Activated CD4-positive, alpha-beta T cell treated with anti-CD3 and anti-CD28 coated beads for 36 hours (primary cell): ENCODE measurements at regions of chr6 and their contacts with region 1.

Region 1: DNA sequence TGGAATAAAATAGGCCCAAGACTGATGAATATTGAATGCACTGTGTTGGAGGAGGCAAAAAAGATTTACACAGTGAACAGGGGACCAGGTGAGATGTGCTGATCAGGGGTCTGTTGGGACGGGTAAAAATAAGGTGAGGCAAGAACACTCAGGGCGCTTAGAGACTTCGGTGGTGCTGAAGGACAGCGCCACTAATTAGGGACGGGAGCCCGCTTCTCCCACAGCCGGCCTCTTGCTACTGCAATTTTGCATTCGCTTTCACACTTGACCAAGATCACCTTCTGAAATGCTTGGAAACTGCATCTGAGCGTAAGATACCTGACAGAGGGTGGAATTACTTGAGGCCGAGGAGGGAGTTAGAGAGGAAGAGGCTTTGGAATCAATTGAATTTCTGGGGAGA is 7.3 kb downstream of the TFAP2D start:
- DNase-seq: no peak
- ATAC-seq: no peak
- H3K4me3 Mint-ChIP-seq: no peak overlapping the region
- H3K27ac Mint-ChIP-seq: no peak overlapping the region
- H3K4me1 Mint-ChIP-seq: peaks cover 8% of the 10 kb centered on the region
- H3K27me3 Mint-ChIP-seq: peaks cover 67% of the 10 kb centered on the region

Region 2: DNA sequence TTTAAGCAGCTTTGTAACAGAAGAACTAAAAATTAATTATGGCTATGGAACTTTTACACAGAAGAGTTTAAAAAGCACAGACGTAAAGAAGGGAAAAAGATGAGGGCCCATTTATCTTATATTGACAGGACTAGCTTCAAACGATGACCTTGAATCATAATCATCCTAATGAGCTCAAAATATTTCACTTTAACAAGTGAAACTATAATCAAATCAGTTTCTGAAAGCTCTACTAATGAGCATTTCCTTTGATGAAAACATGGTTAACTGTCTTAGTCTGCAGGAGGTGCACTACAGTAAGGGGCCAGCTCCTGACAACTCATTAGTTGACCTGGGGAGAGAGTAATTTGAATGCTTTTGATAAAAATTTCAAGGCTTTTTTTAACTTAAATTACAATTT is 442.8 kb before region 1 on chr6:
- CTCF ChIA-PET with region 1: no interaction called
- POLR2A ChIA-PET with region 1: interaction called, 14 read pairs
- intact Hi-C with region 1: no loop called
- DNase-seq: no peak
- ATAC-seq: no peak
- H3K4me3 Mint-ChIP-seq: no peak overlapping the region
- H3K27ac Mint-ChIP-seq: no peak overlapping the region
- H3K4me1 Mint-ChIP-seq: no peaks in the 10 kb centered on the region
- H3K27me3 Mint-ChIP-seq: no peaks in the 10 kb centered on the region

Region 3: GRCh38 chr6:50848989-50849795 is 128.6 kb after region 1 on chr6:
- CTCF ChIA-PET with region 1: no interaction called
- POLR2A ChIA-PET with region 1: no interaction called
- intact Hi-C with region 1: loop called in 1 of 2 experiments (anchors 5 kb)
- DNase-seq: no peak
- ATAC-seq: no peak
- H3K4me3 Mint-ChIP-seq: no peak overlapping the region
- H3K27ac Mint-ChIP-seq: no peak overlapping the region
- H3K4me1 Mint-ChIP-seq: no peaks in the 10 kb centered on the region
- H3K27me3 Mint-ChIP-seq: peaks cover 72% of the 10 kb centered on the region